Naive thymus-derived CD4-positive, alpha-beta T cell (primary cell): ENCODE measurements at regions of chr2 and their contacts with region 1.

Region 1: GRCh38 chr2:219498280-219499057 is at the start of gene GMPPA:
- DNase-seq: peak; percentile 78 to 95 (median 90)
- ATAC-seq: peak; percentile 94
- H3K4me3 ChIP-seq: peak within 1 kb of the TSS; percentile 85
- H3K4me3 Mint-ChIP-seq: peak within 1 kb of the TSS; percentile 91 to 99 (median 96)
- H3K27ac ChIP-seq: peak within 1 kb of the TSS; percentile 79
- H3K27ac Mint-ChIP-seq: peak within 1 kb of the TSS; percentile 76 to 97 (median 86)
- H3K4me1 ChIP-seq: peaks cover 19 to 22% of the 10 kb centered on the region in 2 donors
- H3K4me1 Mint-ChIP-seq: peaks cover 26 to 42% (median 36%) of the 10 kb centered on the region in 7 donors
- H3K27me3 ChIP-seq: peaks cover 4 to 9% of the 10 kb centered on the region in 2 donors
- H3K27me3 Mint-ChIP-seq: peaks cover 28 to 47% (median 40%) of the 10 kb centered on the region in 5 donors
- total RNA-seq, gene GMPPA: 22.4 to 58.3 (median 37.2) TPM

Region 2: DNA sequence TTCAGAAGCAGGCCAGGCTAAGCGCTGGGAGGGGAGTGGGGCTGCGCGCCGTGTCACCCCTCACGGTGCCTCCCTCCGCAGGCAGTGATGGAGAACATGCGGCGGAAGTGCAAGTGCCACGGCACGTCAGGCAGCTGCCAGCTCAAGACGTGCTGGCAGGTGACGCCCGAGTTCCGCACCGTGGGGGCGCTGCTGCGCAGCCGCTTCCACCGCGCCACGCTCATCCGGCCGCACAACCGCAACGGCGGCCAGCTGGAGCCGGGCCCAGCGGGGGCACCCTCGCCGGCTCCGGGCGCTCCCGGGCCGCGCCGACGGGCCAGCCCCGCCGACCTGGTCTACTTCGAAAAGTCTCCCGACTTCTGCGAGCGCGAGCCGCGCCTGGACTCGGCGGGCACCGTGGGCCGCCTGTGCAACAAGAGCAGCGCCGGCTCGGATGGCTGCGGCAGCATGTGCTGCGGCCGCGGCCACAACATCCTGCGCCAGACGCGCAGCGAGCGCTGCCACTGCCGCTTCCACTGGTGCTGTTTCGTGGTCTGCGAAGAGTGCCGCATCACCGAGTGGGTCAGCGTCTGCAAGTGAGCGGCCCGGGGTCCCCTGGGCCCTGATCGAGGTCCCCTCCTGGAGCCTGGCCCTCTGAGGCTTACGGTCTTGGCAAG is 605.6 kb before region 1 on chr2:
- CTCF ChIA-PET with region 1: no interaction called
- POLR2A ChIA-PET with region 1: no interaction called
- intact Hi-C with region 1: loop called (anchors 5 to 10 kb)
- DNase-seq: peak; percentile 82 to 93 (median 91)
- ATAC-seq: peak; percentile 78
- H3K4me3 ChIP-seq: peak overlapping the region; percentile 48
- H3K4me3 Mint-ChIP-seq: peak overlapping the region; percentile 58 to 85 (median 75)
- H3K27ac ChIP-seq: peak overlapping the region; percentile 89
- H3K27ac Mint-ChIP-seq: peak overlapping the region; percentile 59 to 96 (median 89)
- H3K4me1 ChIP-seq: peaks cover 53 to 54% of the 10 kb centered on the region in 2 donors
- H3K4me1 Mint-ChIP-seq: peaks cover 38 to 56% (median 52%) of the 10 kb centered on the region in 7 donors
- H3K27me3 ChIP-seq: no peaks in the 10 kb centered on the region
- H3K27me3 Mint-ChIP-seq: peaks cover 0 to 76% (median 0%) of the 10 kb centered on the region in 5 donors

Region 3: DNA sequence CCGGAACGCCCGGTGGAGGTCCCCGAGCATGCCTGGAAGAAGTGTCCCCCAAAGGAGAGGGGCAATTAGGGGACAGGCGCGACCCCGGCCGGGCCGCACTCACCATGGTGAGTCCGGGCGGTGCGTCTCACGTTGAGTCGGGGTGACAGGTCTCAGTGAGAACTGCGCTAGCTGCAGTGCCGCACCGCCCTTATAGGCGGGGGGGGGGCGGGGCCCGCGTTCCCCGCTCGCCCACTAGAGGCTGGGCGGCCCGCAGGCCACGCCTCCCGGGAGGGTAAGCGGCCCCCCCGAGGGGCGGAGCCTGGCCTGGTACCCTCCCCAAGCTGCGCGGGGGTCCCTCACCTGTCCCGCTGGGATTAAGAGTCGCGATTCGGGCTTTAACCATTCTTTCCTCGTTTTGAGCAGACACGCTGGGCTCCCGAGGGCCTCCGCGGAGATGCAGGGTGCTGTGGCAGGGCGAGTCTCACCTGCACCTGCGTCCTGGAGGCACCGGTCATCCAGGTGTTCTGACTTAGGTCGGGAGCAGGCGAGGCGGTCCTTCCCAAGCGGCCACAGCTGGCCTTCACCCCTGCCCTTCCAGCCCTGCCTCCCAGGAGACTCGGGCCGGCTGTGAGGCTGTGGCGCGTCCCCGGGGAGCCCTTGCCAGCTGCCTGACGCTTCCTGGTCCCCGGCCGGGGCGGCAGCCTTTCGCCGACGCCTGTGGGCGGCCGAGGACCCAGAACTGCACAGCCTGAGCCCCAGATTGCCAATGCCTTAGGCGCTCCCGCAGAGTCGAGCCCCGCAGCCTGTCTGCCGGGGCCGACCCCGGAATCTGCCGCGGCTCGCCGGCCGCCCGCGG is 244.5 kb before region 1 on chr2 and contains the start of gene TUBA4A:
- CTCF ChIA-PET with region 1: no interaction called
- POLR2A ChIA-PET with region 1: no interaction called
- intact Hi-C with region 1: loop called in 1 of 2 experiments (anchors 1 kb)
- DNase-seq: peak; percentile 84 to 94 (median 91)
- ATAC-seq: peak; percentile 92
- H3K4me3 ChIP-seq: peak within 1 kb of the TSS; percentile 79
- H3K4me3 Mint-ChIP-seq: peak within 1 kb of the TSS; percentile 82 to 100 (median 92)
- H3K27ac ChIP-seq: peak within 1 kb of the TSS; percentile 95
- H3K27ac Mint-ChIP-seq: peak within 1 kb of the TSS; percentile 88 to 99 (median 96)
- H3K4me1 ChIP-seq: peaks cover 31 to 38% of the 10 kb centered on the region in 2 donors
- H3K4me1 Mint-ChIP-seq: peaks cover 28 to 54% (median 47%) of the 10 kb centered on the region in 7 donors
- H3K27me3 ChIP-seq: no peaks in the 10 kb centered on the region
- H3K27me3 Mint-ChIP-seq: peaks cover 0 to 3% (median 0%) of the 10 kb centered on the region in 5 donors
- total RNA-seq, gene TUBA4A: 82.9 to 260 (median 183) TPM

Region 4: DNA sequence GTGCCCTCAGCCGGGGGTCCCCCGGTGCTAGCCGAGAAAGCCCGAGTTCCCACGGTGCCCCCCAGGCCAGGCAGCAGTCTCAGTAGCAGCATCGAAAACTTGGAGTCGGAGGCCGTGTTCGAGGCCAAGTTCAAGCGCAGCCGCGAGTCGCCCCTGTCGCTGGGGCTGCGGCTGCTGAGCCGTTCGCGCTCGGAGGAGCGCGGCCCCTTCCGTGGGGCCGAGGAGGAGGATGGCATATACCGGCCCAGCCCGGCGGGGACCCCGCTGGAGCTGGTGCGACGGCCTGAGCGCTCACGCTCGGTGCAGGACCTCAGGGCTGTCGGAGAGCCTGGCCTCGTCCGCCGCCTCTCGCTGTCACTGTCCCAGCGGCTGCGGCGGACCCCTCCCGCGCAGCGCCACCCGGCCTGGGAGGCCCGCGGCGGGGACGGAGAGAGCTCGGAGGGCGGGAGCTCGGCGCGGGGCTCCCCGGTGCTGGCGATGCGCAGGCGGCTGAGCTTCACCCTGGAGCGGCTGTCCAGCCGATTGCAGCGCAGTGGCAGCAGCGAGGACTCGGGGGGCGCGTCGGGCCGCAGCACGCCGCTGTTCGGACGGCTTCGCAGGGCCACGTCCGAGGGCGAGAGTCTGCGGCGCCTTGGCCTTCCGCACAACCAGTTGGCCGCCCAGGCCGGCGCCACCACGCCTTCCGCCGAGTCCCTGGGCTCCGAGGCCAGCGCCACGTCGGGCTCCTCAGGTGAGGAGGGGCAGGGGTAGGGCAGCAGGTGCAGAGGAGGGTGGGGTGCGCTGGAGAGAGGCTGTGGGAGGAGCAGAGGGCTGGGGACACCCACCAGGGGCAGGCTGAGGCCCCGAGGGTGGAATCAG is 13.9 kb before region 1 on chr2:
- CTCF ChIA-PET with region 1: interaction called, 3 read pairs
- POLR2A ChIA-PET with region 1: interaction called, 3 read pairs
- intact Hi-C with region 1: loop called in 1 of 2 experiments (anchors 1 kb)
- DNase-seq: peak in 1 of 9 donors; percentile 12
- ATAC-seq: peak; percentile 23
- H3K4me3 ChIP-seq: peak overlapping the region; percentile 17
- H3K4me3 Mint-ChIP-seq: peak overlapping the region in 9 of 10 donors; percentile 65 to 83 (median 72)
- H3K27ac ChIP-seq: no peak overlapping the region
- H3K27ac Mint-ChIP-seq: no peak overlapping the region
- H3K4me1 ChIP-seq: no peaks in the 10 kb centered on the region
- H3K4me1 Mint-ChIP-seq: peaks cover 0 to 6% (median 0%) of the 10 kb centered on the region in 7 donors
- H3K27me3 ChIP-seq: no peaks in the 10 kb centered on the region
- H3K27me3 Mint-ChIP-seq: peaks cover 19 to 50% (median 31%) of the 10 kb centered on the region in 5 donors

Region 5: DNA sequence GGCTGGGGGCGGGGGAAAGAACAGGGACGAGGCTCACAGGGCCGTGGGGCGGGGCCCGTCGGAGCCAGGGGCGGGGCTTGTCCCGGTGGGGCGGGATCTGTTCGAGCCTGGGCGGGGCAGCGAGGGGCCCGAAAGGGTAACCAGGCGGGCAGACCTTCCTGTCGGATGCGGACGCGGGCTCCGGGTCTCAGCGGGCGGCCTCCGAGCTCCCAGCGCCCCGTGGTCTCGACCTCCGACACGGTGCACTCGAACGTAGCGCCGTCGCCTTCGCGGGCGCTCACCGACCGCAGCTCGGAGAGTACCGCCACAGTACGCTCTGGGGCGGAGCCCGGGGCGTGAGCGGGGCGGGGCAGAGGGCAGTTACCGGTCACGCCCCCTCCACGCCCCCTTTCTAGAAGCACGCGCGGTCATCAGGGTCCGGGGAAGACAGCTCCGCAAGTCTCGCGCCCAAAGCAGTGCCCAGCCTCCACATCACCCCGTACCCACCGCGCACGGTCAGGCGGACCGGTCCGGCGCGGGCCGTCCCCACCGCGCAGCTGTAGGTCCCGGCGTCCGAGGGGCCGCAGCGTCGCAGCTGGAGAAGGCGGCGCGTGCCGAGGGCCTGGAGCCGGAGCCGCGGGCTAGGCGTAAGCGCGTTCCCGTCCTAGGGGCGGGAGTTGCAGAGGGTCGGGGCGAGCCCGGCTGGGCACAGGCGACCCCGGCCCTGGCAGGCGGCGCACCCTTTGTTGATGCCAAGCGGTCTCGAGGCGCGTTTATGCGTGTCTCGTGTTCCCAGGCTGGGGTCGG is 54.1 kb after region 1 on chr2:
- CTCF ChIA-PET with region 1: no interaction called
- POLR2A ChIA-PET with region 1: no interaction called
- intact Hi-C with region 1: loop called (anchors 2 kb)
- DNase-seq: peak; percentile 62 to 89 (median 73)
- ATAC-seq: peak; percentile 94
- H3K4me3 ChIP-seq: peak overlapping the region; percentile 57
- H3K4me3 Mint-ChIP-seq: peak overlapping the region; percentile 60 to 85 (median 78)
- H3K27ac ChIP-seq: no peak overlapping the region
- H3K27ac Mint-ChIP-seq: peak overlapping the region in 3 of 9 donors; percentile 14 to 59 (median 48)
- H3K4me1 ChIP-seq: peaks cover 5 to 13% of the 10 kb centered on the region in 2 donors
- H3K4me1 Mint-ChIP-seq: peaks cover 5 to 20% (median 8%) of the 10 kb centered on the region in 7 donors
- H3K27me3 ChIP-seq: peaks cover 3 to 17% of the 10 kb centered on the region in 2 donors
- H3K27me3 Mint-ChIP-seq: peaks cover 0 to 48% (median 33%) of the 10 kb centered on the region in 5 donors

Region 6: GRCh38 chr2:220188031-220188430 is 689.6 kb after region 1 on chr2:
- CTCF ChIA-PET with region 1: no interaction called
- POLR2A ChIA-PET with region 1: no interaction called
- intact Hi-C with region 1: no loop called
- DNase-seq: no peak
- ATAC-seq: no peak
- H3K4me3 ChIP-seq: no peak overlapping the region
- H3K4me3 Mint-ChIP-seq: no peak overlapping the region
- H3K27ac ChIP-seq: no peak overlapping the region
- H3K27ac Mint-ChIP-seq: no peak overlapping the region
- H3K4me1 ChIP-seq: no peaks in the 10 kb centered on the region
- H3K4me1 Mint-ChIP-seq: no peaks in the 10 kb centered on the region
- H3K27me3 ChIP-seq: no peaks in the 10 kb centered on the region
- H3K27me3 Mint-ChIP-seq: peaks cover 0 to 4% (median 0%) of the 10 kb centered on the region in 5 donors